Activated CD4-positive, alpha-beta memory T cell treated with anti-CD3 and anti-CD28 coated beads, Interleukin-2, amount 10 ng/mL, durations not matched to agents 7 days and 5 days (primary cell): ENCODE measurements at regions of chr9 and their contacts with region 1.

Region 1: DNA sequence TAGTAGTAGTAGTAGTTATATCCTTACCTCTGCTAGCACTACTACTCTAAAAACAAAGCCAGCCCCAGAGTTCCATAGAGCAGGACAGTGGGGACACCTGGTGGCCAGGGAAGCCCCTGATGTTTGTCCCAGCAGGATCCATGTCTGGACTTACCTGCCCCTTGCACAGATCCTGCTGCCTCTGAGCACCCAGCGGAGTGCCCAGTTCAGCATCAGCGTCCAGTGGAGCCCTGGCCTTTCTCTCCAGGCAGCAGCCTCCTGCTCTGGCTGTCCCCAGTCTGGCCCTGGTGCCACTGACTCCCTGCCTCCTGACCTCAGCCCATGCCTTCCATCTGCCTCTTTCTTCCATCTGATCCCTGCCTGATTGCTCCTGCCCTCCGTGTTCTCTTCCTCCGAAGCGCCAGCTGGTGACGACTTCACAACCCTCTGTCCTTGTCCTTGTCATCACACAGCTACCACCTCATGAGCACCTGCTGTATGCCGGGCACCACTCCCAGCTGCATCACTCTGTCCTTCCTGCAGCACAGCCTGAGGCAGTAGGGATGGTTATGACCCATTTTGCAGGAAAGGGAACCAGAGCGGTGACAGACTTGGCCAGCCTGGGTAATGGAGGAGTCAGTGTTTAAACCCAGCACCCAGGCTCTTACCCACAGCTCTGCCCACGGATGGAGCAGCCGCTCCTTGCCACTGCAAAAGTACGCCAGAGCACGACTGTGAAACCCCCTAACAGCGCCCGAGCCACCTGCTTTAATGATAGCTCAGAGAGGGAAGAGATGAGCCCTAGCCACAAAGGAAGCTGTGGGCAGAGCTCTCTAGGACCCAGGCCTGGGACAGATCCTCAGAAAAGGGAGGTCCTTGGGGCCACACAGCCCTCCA is 11.5 kb downstream of the SARDH start:
- DNase-seq: peak; percentile 59
- H3K4me3 Mint-ChIP-seq: no peak overlapping the region
- H3K27ac Mint-ChIP-seq: no peak overlapping the region
- H3K4me1 Mint-ChIP-seq: peaks cover 8% of the 10 kb centered on the region
- H3K27me3 Mint-ChIP-seq: peaks cover 10% of the 10 kb centered on the region

Region 2: GRCh38 chr9:133742849-133743444 is 16.3 kb after region 1 on chr9:
- CTCF ChIA-PET with region 1: interaction called, 12 read pairs
- POLR2A ChIA-PET with region 1: no interaction called
- DNase-seq: peak; percentile 69
- H3K4me3 Mint-ChIP-seq: no peak overlapping the region
- H3K27ac Mint-ChIP-seq: no peak overlapping the region
- H3K4me1 Mint-ChIP-seq: peaks cover 2% of the 10 kb centered on the region
- H3K27me3 Mint-ChIP-seq: peaks cover 17% of the 10 kb centered on the region